ENCODE measurements at regions of chr7 and their contacts with region 1.

Region 1: DNA sequence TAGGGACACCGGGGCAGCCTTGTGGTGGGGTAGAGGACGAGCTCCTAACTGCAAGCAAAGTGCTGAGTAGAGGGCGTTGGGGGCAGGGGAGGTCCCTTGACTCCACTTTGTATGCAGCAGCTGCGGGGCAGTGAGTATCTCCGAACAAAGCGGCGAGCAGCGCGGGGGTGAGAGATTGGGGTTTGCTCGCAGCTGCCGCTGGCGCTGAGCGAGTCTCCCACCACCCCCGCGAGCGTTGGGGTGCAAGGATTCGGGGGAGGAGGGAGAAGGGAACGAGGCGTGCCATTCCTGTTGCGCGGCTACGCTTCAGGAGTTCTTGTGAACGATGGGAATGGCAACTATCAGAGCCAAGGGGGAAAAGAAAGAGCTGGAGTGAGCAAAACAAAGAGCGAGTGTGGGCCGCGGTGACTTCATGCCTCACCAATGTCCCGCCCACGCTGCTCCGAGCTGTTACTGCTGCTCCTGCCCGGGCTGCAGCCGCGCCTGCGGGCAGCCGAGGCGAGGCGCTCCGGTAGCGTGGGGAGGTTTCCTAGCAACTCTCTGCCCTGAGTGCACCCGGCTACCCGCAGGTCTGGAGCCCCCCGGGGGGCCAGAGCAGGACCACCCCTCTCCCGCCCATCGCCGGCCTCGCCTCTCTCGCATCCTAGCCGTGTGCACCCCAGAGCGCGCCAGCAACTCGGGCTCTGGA is at the start of gene ITGB8:
- DNase-seq: peak; percentile 88
- ATAC-seq: peak; percentile 94
- total RNA-seq, gene ITGB8: 1.9 TPM

Region 2: GRCh38 chr7:20407585-20408461 is 77.4 kb after region 1 on chr7:
- intact Hi-C with region 1: loop called (anchors 10 kb)
- DNase-seq: peak; percentile 87
- ATAC-seq: peak; percentile 91